Activated CD4-positive, alpha-beta memory T cell treated with anti-CD3 and anti-CD28 coated beads for 36 hours (primary cell): ENCODE measurements at regions of chr10 and their contacts with region 1.

Region 1: DNA sequence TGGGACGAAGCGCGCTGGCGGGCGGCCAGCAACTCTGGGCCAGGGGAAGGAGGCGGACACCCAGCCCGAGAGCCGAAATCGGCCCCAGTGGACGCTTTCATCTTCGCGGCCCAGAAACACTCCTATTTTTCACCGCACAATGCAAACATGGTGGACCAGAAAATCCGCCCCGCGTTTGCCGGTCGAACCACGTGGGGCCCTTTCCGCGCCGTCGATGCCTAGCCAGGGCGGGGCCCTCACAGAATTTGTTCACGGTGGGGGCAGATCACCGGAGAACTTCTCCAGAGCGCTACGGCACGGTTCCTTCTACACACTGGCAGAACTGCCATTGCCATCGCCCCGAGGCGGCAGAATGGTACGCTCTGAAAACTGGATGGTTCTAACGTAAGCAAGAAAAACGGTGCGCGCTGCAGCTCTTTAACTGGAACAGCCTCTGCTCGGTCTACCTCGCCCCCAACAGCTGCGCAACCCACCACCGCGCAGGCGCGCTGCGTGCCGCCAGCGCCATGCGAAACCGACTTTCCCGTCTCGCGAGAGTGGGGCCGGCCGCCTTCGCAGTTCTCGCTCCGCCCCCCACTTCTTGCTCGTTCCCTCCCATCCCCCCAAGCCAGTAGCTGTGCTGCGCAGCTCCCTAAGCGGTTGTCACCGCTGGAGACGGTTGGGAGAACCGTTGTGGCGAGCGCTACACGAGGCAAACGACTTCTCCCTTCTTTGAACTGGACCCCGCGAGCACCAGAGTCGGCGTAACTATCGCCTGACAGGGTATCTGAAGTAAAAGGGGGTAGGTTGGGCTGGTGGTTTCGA is at the start of gene HNRNPH3:
- DNase-seq: peak; percentile 99
- H3K4me3 Mint-ChIP-seq: peak within 1 kb of the TSS; percentile 100
- H3K27ac Mint-ChIP-seq: peak within 1 kb of the TSS; percentile 100
- H3K4me1 Mint-ChIP-seq: peaks cover 34% of the 10 kb centered on the region
- H3K27me3 Mint-ChIP-seq: peaks cover 3% of the 10 kb centered on the region
- total RNA-seq, gene HNRNPH3: 140 to 144 TPM

Region 2: DNA sequence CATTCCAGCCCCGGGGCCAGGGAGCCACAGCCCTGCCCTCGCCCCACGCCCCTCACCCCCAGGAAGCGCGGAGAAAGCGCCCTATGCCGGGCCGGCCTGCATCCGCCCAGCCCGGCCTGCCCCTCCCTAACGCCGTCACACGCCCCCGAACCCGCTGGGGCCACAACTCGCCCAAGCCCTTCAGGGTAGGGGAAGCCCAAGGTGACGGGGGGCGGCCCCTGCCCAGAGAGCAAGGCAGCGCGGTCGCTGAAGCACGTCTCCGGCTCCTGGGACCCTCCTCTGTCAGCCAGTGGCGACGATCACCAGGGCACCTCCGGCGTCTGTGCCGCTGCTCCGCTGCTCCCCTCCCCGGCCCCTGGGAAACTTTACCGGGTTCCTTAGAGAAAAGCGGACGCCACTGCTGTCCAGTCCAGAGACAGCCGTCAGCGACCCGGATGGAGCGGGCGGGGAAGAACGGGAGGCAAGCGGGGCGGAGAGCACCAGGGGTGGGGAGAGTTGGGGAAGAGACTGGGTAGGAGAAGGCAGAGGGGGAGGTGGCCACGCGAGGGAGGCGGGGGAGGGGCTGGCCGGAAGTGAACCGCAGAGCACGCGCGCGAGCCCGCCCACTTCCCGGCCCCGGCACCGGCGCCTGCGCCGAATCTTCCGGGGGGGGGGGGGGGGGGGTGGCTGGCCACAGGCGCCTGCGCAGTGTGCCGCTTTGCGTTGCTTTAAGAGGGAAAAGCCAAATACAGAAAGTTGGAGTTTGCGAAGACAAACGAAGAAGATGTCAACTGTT is 256.7 kb before region 1 on chr10 and contains the start of gene HERC4:
- CTCF ChIA-PET with region 1: no interaction called
- POLR2A ChIA-PET with region 1: no interaction called
- intact Hi-C with region 1: loop called (anchors 5 kb)
- DNase-seq: peak; percentile 94
- H3K4me3 Mint-ChIP-seq: peak within 1 kb of the TSS; percentile 89
- H3K27ac Mint-ChIP-seq: peak within 1 kb of the TSS; percentile 89
- H3K4me1 Mint-ChIP-seq: peaks cover 35% of the 10 kb centered on the region
- H3K27me3 Mint-ChIP-seq: no peaks in the 10 kb centered on the region
- total RNA-seq, gene HERC4: 55.7 to 59.0 TPM

Region 3: DNA sequence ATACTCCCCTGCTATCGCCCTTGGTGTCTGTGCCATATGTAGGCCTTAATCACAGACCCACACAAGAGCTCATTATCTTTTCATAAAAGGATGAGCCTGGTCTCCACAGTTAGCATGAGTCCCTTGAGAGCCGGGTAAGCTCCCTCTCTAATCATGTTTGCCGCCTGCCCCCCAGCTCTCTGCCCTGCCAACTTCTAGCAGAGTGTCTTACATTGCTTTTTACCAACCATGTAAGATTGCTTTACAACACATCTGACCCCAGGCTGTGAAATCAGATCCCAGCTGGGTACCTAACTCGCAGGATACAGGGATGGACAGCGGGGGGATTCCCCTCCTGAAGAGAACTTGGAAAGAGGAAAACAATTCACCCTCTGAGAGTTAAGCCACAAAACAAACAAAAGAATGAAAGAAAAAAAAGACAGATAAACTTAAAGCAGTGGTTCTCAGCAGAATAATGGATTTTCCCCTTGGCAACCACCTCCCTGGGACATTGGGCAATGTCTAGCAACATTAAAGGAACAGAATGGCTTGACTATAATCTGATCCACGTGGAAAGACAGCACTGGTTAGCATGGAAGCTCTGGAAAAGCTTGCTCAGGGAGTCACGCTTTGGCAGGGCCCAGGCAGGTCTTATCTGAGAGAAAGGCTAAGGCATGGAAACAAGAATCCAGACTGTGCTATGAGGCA is 60.3 kb before region 1 on chr10:
- CTCF ChIA-PET with region 1: no interaction called
- POLR2A ChIA-PET with region 1: no interaction called
- intact Hi-C with region 1: no loop called
- DNase-seq: no peak
- H3K4me3 Mint-ChIP-seq: no peak overlapping the region
- H3K27ac Mint-ChIP-seq: no peak overlapping the region
- H3K4me1 Mint-ChIP-seq: no peaks in the 10 kb centered on the region
- H3K27me3 Mint-ChIP-seq: no peaks in the 10 kb centered on the region

Region 4: DNA sequence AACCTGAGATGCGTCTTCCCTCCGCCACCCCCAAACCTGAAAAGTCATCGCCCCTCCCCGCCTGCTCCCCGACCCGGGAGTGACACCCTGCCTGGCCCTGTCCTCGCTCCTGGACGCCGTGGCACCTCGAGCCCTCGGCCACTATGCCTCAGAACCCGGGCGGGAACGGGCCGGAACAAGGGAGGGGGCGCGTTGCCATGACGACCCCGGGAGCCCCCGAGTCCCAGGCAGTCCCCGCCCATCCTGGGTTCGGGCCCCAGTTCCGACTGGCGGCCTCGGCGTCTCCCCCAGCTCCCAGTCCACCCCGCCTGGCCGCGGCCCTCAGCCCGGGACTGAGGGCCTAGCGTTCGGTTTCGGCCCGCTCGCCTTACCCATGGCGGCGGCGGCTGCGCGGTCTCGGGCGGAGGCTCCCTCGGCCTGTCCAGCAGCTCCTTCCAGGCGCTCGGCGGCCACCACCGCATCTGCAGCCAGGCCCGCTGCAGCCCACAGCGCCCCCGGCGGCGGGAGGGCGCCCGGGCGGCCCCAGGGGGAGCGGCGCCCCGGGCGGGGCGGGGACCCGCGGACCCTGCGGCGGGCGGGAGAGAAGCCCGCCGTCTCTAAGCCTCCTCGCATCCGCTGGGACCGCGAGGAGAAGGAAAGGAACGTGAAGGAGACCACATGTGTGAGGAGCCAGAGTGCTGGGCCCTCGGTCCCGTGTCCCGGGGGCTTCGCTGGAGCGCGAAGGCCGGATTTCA is 75.3 kb after region 1 on chr10 and contains the start of gene RUFY2:
- CTCF ChIA-PET with region 1: interaction called, 5 read pairs
- POLR2A ChIA-PET with region 1: interaction called, 5 read pairs
- intact Hi-C with region 1: loop called (anchors 5 kb)
- DNase-seq: peak; percentile 82
- H3K4me3 Mint-ChIP-seq: peak within 1 kb of the TSS; percentile 85
- H3K27ac Mint-ChIP-seq: peak within 1 kb of the TSS; percentile 74
- H3K4me1 Mint-ChIP-seq: peaks cover 13% of the 10 kb centered on the region
- H3K27me3 Mint-ChIP-seq: no peaks in the 10 kb centered on the region
- total RNA-seq, gene RUFY2: 6.4 to 8.1 TPM

Region 5: DNA sequence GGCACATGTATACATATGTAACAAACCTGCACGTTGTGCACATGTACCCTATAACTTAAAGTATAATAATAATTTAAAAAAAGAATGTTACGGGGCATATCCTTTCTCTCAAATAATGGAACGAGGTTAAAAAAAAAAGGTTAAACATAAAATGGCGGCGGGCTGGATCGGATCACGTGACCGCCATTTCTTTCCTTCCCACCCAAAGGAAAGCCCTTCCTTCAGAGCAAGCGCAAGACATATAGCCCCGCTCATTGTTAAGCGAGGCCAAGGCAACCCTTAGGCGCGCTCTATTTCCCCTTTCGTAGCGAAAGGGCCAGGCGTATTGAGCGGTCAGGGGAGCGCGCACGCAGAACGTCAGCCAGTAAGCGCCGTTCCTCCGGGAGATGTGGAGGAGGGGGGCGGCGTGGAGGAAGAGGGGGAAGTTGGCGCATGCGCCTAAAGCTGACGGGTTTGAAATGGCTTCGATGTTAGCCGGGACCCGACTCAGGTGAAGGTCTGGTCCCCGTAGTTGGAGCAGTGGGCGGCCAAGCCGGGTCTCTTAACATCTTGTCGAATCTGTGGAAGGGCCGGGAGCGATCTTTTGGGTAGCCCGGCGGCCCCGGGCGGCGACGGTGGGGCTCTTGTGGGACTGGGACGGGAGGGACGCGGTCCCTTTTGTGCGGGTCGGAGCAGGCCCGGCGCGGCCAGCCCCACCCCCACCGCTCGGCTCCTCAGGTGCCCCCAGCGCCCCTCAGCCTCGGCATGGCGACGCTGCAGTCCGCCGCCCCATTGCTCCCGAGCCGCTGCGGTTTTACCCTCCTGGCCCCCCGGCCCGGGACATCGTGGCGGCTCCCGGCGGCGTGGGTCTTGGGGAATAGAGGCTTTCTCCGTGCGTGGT is 389.4 kb after region 1 on chr10 and contains the start of gene CCAR1:
- CTCF ChIA-PET with region 1: no interaction called
- POLR2A ChIA-PET with region 1: no interaction called
- intact Hi-C with region 1: loop called (anchors 2 kb)
- DNase-seq: peak; percentile 98
- H3K4me3 Mint-ChIP-seq: peak within 1 kb of the TSS; percentile 96
- H3K27ac Mint-ChIP-seq: peak within 1 kb of the TSS; percentile 96
- H3K4me1 Mint-ChIP-seq: peaks cover 10% of the 10 kb centered on the region
- H3K27me3 Mint-ChIP-seq: peaks cover 1% of the 10 kb centered on the region
- total RNA-seq, gene CCAR1: 72.7 to 74.4 TPM